ENCODE measurements at regions of chr1 and their contacts with region 1.

Region 1: GRCh38 chr1:240044620-240045019 is 47.1 kb upstream of the FMN2 start:
- DNase-seq: no peak
- ATAC-seq: no peak
- H3K4me3 ChIP-seq: no peak overlapping the region
- H3K27ac ChIP-seq: no peak overlapping the region
- H3K4me1 ChIP-seq: no peaks in the 10 kb centered on the region
- H3K27me3 ChIP-seq: peaks cover 0 to 8% (median 0%) of the 10 kb centered on the region in 7 donors
- CTCF ChIP-seq: no peak

Region 2: GRCh38 chr1:240136402-240136801 is 91.8 kb after region 1 on chr1:
- intact Hi-C with region 1: loop called in 1 of 10 experiments (anchors 10 kb)
- DNase-seq: no peak
- ATAC-seq: no peak
- H3K4me3 ChIP-seq: no peak overlapping the region
- H3K27ac ChIP-seq: no peak overlapping the region
- H3K4me1 ChIP-seq: no peaks in the 10 kb centered on the region
- H3K27me3 ChIP-seq: peaks cover 0 to 24% (median 10%) of the 10 kb centered on the region in 7 donors
- CTCF ChIP-seq: no peak

Measured in heart right ventricle (tissue), 16 donors.